Dorsolateral prefrontal cortex (tissue), 120 donors: ENCODE measurements at regions of chr9 and their contacts with region 1.

Region 1: GRCh38 chr9:36102742-36103495 is 33.6 kb upstream of the GLIPR2 start:
- DNase-seq: peak; percentile 74 to 92 (median 82)
- H3K4me3 ChIP-seq: no peak overlapping the region
- H3K27ac ChIP-seq: peak overlapping the region in 27 of 59 donors; percentile 4 to 69 (median 37)
- H3K27me3 ChIP-seq: no peaks in the 10 kb centered on the region
- CTCF ChIP-seq: peak; percentile 67 to 90 (median 82)

Region 2: GRCh38 chr9:36008774-36009300 is 94.1 kb before region 1 on chr9:
- intact Hi-C with region 1: loop called in 1 of 2 experiments (anchors 5 kb)
- DNase-seq: peak in 5 of 10 donors; percentile 6 to 57 (median 37)
- H3K4me3 ChIP-seq: peak overlapping the region in 1 of 59 donors; percentile 24
- H3K27ac ChIP-seq: no peak overlapping the region
- H3K27me3 ChIP-seq: peaks cover 0 to 17% (median 0%) of the 10 kb centered on the region in 45 donors
- CTCF ChIP-seq: peak; percentile 73 to 98 (median 93)

Region 3: DNA sequence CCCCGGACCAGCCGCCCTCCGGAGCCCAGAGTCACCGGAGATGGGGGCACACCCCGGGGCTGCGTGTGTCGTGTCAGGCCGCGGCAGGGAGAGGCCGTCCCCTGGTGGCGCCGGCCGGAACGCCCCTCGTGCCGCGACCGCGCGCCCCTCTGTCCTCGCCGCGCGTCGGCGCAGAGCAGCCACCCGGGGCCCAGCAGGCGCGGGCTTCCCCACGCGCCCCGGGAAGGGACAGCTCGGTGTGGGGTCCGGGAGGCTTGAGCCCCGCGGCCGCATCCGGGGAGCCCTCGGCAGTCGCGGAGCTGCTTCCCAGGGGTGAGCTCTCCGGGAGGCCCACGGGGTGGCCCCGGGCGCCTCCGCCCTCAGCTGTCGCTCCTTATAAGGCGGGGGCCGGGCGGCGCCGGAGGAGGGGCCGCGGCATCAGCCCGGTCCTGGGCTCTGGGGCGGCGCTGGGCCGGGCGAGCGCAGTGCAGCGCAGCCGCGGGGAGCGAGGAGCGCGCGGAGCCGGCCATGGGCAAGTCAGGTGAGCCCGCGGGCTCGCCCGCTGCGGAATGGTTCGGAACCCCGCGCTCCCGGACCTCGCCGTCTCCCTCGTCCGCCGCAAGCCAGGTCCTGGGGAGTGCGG is 33.5 kb after region 1 on chr9 and contains the start of gene GLIPR2:
- intact Hi-C with region 1: loop called in 1 of 2 experiments (anchors 5 kb)
- DNase-seq: peak; percentile 55 to 89 (median 74)
- H3K4me3 ChIP-seq: peak within 1 kb of the TSS; percentile 40 to 98 (median 83)
- H3K27ac ChIP-seq: peak within 1 kb of the TSS in 56 of 59 donors; percentile 11 to 86 (median 74)
- H3K27me3 ChIP-seq: no peaks in the 10 kb centered on the region
- CTCF ChIP-seq: peak in 37 of 56 donors; percentile 7 to 58 (median 37)
- total RNA-seq, gene GLIPR2: 4.1 to 41.0 (median 11.6) TPM

Region 4: GRCh38 chr9:36148311-36149051 is 45.6 kb after region 1 on chr9:
- intact Hi-C with region 1: loop called in 1 of 2 experiments (anchors 5 kb)
- DNase-seq: peak; percentile 93 to 99 (median 97)
- H3K4me3 ChIP-seq: peak overlapping the region in 18 of 59 donors; percentile 0 to 46 (median 24)
- H3K27ac ChIP-seq: peak overlapping the region; percentile 86 to 99 (median 94)
- H3K27me3 ChIP-seq: no peaks in the 10 kb centered on the region
- CTCF ChIP-seq: peak in 36 of 56 donors; percentile 3 to 57 (median 24)